ENCODE measurements at regions of chr7 and their contacts with region 1.

Region 1: DNA sequence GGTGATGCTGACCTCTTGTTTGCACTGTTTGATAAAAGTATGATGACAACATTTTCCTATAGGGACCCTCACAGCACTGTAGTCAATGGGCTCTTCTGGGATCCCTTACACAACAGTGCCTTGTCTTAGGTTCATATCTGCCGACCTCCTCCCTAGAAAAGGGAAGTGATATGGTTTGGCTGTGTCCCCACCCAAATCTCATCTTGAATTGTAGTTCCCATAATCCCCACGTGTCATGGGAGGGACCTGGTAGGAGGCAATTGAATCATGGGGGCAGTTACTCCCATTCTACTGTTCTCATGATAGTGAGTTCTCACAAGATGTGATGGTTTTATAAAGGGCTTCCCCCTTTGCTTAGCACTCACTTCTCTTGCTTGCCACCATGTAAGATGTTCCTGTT is 23.1 kb downstream of the ZC3HAV1 start:
- DNase-seq: no peak
- ATAC-seq: no peak
- H3K4me3 ChIP-seq: no peak overlapping the region
- H3K4me3 Mint-ChIP-seq: peak overlapping the region in 1 of 3 donors; percentile 64
- H3K27ac ChIP-seq: no peak overlapping the region
- H3K27ac Mint-ChIP-seq: peak overlapping the region; percentile 70 to 90
- H3K4me1 ChIP-seq: peaks cover 63 to 73% of the 10 kb centered on the region in 2 experiments
- H3K4me1 Mint-ChIP-seq: peaks cover 84 to 91% (median 90%) of the 10 kb centered on the region in 3 donors
- H3K27me3 ChIP-seq: no peaks in the 10 kb centered on the region
- H3K27me3 Mint-ChIP-seq: no peaks in the 10 kb centered on the region

Region 2: GRCh38 chr7:139118234-139118804 is 31.9 kb after region 1 on chr7:
- CTCF ChIA-PET with region 1: interaction called in 1 of 2 experiments, 3 read pairs
- POLR2A ChIA-PET with region 1: interaction called in 1 of 2 experiments, 11 read pairs
- DNase-seq: no peak
- ATAC-seq: peak in 3 of 4 experiments; percentile 48 to 58 (median 48)
- H3K4me3 ChIP-seq: peak overlapping the region in 1 of 2 donors; percentile 23
- H3K4me3 Mint-ChIP-seq: peak overlapping the region; percentile 4 to 64 (median 53)
- H3K27ac ChIP-seq: peak overlapping the region; percentile 63
- H3K27ac Mint-ChIP-seq: peak overlapping the region; percentile 75 to 94
- H3K4me1 ChIP-seq: peaks cover 9 to 15% of the 10 kb centered on the region in 2 experiments
- H3K4me1 Mint-ChIP-seq: peaks cover 40 to 52% (median 41%) of the 10 kb centered on the region in 3 donors
- H3K27me3 ChIP-seq: no peaks in the 10 kb centered on the region
- H3K27me3 Mint-ChIP-seq: no peaks in the 10 kb centered on the region

Region 3: GRCh38 chr7:139294951-139295575 is 208.6 kb after region 1 on chr7:
- CTCF ChIA-PET with region 1: no interaction called
- POLR2A ChIA-PET with region 1: no interaction called
- DNase-seq: no peak
- ATAC-seq: no peak
- H3K4me3 ChIP-seq: no peak overlapping the region
- H3K4me3 Mint-ChIP-seq: no peak overlapping the region
- H3K27ac ChIP-seq: no peak overlapping the region
- H3K27ac Mint-ChIP-seq: no peak overlapping the region
- H3K4me1 ChIP-seq: no peaks in the 10 kb centered on the region
- H3K4me1 Mint-ChIP-seq: no peaks in the 10 kb centered on the region
- H3K27me3 ChIP-seq: no peaks in the 10 kb centered on the region
- H3K27me3 Mint-ChIP-seq: no peaks in the 10 kb centered on the region